Activated CD8-positive, alpha-beta T cell treated with anti-CD3 and anti-CD28 coated beads for 36 hours (primary cell): ENCODE measurements at regions of chr2 and their contacts with region 1.

Region 1: GRCh38 chr2:219521066-219521880 is 7.0 kb downstream of the ASIC4 start:
- DNase-seq: peak; percentile 30
- ATAC-seq: peak; percentile 65
- H3K4me3 Mint-ChIP-seq: no peak overlapping the region
- H3K27ac Mint-ChIP-seq: no peak overlapping the region
- H3K4me1 Mint-ChIP-seq: peaks cover 7% of the 10 kb centered on the region
- H3K27me3 Mint-ChIP-seq: peaks cover 63% of the 10 kb centered on the region
- CTCF ChIP-seq: peak; percentile 50

Region 2: GRCh38 chr2:219509780-219510511 is 11.3 kb before region 1 on chr2:
- CTCF ChIA-PET with region 1: interaction called, 34 read pairs
- POLR2A ChIA-PET with region 1: interaction called, 4 read pairs
- intact Hi-C with region 1: no loop called
- DNase-seq: peak; percentile 69
- ATAC-seq: peak; percentile 89
- H3K4me3 Mint-ChIP-seq: no peak overlapping the region
- H3K27ac Mint-ChIP-seq: no peak overlapping the region
- H3K4me1 Mint-ChIP-seq: peaks cover 18% of the 10 kb centered on the region
- H3K27me3 Mint-ChIP-seq: peaks cover 44% of the 10 kb centered on the region
- CTCF ChIP-seq: peak; percentile 53